HepG2 (cell line): ENCODE measurements at regions of chr1 and their contacts with region 1.

Region 1: DNA sequence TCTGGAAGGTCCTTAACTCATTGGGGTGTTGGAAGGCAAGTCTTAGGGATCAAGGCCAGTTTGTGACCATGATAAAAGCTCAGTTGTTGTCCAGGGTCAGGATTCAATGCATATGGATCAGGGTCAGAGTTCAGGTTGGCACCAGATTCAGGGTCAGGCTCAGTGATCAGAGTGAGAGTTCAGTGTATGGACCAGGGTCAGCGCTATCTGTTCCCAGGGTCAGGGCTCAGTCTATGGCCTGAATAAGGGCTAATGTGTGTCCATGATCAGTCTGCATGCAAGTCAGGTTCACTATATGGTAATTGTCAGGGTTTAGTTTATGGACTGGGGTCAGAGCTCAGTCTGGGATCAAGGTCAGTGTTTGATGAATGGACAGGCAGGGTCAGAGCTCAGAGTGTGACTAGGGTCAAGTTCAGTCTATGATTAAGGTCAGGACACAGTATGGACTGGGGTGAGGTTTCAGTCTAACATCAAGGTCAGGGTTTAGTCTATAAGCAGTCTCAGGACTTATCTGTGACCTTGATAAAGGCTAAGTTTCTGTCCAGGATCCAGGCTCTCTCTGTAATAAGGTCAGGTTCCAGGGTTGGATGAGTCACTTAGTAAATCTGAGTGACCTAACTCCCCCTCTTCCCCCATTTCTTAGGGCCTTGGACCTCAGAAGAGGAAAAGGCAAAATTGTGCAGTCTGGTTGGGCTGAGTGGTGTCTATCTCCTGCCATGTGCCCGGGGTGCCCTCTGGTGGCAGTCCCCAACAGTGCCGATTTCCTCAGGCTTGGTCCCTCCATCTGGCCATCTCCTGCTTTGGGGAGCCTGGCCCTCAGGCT is 23.8 kb downstream of the KNCN start:
- DNase-seq: peak; percentile 45
- ATAC-seq: peak; percentile 82
- H3K4me3 ChIP-seq: no peak overlapping the region
- H3K27ac ChIP-seq: no peak overlapping the region
- H3K4me1 ChIP-seq: peaks cover 23% of the 10 kb centered on the region
- H3K27me3 ChIP-seq: peaks cover 6 to 53% of the 10 kb centered on the region in 2 experiments; a peak in 3 of 5 replicates
- CTCF ChIP-seq: peak; percentile 95
- EP300 ChIP-seq: no peak
- POLR2A ChIP-seq: no peak
- RAD21 ChIP-seq: peak; percentile 90

Region 2: GRCh38 chr1:46442317-46443161 is 85.1 kb before region 1 on chr1:
- CTCF ChIA-PET with region 1: interaction called, 37 read pairs
- POLR2A ChIA-PET with region 1: no interaction called
- in situ Hi-C with region 1: loop called (anchors 5 kb)
- intact Hi-C with region 1: loop called (anchors 1 kb)
- DNase-seq: peak; percentile 71
- ATAC-seq: peak; percentile 84
- H3K4me3 ChIP-seq: no peak overlapping the region; a peak in 1 of 6 replicates
- H3K27ac ChIP-seq: no peak overlapping the region
- H3K4me1 ChIP-seq: peaks cover 9% of the 10 kb centered on the region; the same call in 1 of the 2 replicates
- H3K27me3 ChIP-seq: peaks cover 7 to 27% of the 10 kb centered on the region in 2 experiments
- CTCF ChIP-seq: peak; percentile 64
- EP300 ChIP-seq: no peak
- POLR2A ChIP-seq: no peak
- RAD21 ChIP-seq: no peak

Region 3: DNA sequence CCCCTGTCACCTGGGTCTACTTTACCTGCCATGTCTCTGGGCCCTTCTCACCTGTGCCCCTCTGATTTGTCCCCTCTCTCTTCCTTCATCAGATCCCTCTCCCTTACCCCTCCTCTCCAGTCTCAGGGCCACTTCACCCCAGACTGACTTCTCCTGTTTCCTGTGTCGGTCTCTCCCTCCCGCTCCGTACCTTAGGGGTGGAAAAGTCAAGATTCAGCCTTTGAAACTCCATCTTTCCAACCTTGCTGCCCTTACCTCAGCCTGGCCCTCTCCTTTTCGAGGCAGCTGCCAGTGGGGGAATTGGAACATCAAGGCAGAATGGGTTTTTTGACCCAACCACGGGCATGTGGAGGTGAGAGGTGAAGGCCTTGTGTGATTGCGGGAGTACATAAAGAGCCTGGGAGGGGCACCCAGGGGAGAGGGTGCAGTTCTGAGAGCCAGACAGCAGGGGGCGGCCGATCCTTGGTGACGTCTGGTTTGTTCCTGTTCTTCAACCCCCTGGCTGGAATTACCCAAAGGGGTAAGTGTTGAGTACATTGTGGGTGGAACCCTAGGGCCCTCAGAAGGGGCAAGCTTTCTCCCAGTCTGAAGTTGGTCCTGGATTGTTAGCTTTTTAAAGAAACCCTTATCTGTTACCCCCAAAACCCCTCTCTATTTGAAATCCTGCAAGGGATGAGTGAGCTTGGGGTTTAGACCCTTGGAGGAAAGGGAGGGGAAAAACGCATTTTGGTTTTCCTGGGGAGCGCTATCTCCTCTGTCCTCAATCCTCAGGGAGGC is 50.3 kb before region 1 on chr1:
- CTCF ChIA-PET with region 1: interaction called, 51 read pairs
- POLR2A ChIA-PET with region 1: no interaction called
- in situ Hi-C with region 1: loop called (anchors 5 kb)
- intact Hi-C with region 1: loop called (anchors 1 kb)
- DNase-seq: peak; percentile 44
- ATAC-seq: peak; percentile 76
- H3K4me3 ChIP-seq: no peak overlapping the region
- H3K27ac ChIP-seq: no peak overlapping the region
- H3K4me1 ChIP-seq: peaks cover 27% of the 10 kb centered on the region; the same call in 1 of the 2 replicates
- H3K27me3 ChIP-seq: peaks cover 3 to 32% of the 10 kb centered on the region in 2 experiments; a peak in 4 of 5 replicates
- CTCF ChIP-seq: peak; percentile 85
- EP300 ChIP-seq: no peak
- POLR2A ChIP-seq: no peak
- RAD21 ChIP-seq: peak; percentile 73

Region 4: DNA sequence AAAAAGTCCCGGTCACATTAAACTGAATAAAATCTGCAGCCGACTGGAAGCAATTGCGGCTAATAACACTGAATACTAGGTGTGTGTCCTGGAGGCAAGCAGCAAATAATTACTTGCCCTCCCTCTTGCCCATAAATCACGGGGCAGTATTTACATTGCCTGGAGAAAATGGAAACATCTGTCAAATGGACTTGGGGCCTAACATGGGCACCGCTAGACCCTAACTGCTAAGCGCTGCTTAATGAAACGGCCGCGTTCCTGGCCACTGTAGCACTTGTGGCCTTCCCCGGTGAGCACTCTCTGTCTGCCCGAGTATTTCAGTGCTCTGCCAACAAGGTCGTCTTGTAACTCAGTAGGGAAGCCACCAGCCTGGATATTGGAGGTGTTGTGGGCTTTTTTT is 47.6 kb after region 1 on chr1:
- CTCF ChIA-PET with region 1: no interaction called
- POLR2A ChIA-PET with region 1: no interaction called
- in situ Hi-C with region 1: no loop called
- intact Hi-C with region 1: loop called (anchors 2 kb)
- DNase-seq: no peak
- ATAC-seq: no peak
- H3K4me3 ChIP-seq: no peak overlapping the region
- H3K27ac ChIP-seq: no peak overlapping the region
- H3K4me1 ChIP-seq: no peaks in the 10 kb centered on the region; the same call in 1 of the 2 replicates
- H3K27me3 ChIP-seq: no peaks in the 10 kb centered on the region
- CTCF ChIP-seq: no peak
- EP300 ChIP-seq: no peak
- POLR2A ChIP-seq: no peak
- RAD21 ChIP-seq: no peak